ENCODE measurements at regions of chr4 and their contacts with region 1.

Region 1: GRCh38 chr4:6926681-6927478 is 17.3 kb downstream of the TBC1D14 start:
- H3K4me3 Mint-ChIP-seq: peak overlapping the region; percentile 63
- H3K27ac Mint-ChIP-seq: peak overlapping the region; percentile 96
- H3K4me1 Mint-ChIP-seq: peaks cover 95% of the 10 kb centered on the region
- H3K27me3 Mint-ChIP-seq: no peaks in the 10 kb centered on the region

Region 2: DNA sequence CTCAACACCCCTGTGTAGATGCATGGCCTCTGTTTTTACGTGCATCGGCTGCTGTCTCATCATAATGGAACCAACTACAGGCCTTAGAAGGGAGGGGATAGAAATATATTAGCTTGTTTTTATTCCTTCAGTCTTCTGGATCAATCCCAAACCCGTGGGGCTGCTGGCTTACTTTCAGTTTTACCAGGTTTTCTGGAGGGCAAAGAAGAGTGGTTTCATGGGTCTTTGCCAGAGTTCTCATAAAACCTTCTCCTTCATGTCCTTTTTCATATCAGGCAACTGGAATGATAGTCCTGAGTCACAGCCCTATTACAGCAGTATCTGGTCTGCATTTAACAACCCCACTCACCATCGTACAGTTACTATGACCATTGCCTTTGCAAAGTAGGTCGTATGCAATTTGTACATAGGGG is 489.0 kb before region 1 on chr4:
- intact Hi-C with region 1: no loop called
- H3K4me3 Mint-ChIP-seq: no peak overlapping the region
- H3K27ac Mint-ChIP-seq: no peak overlapping the region
- H3K4me1 Mint-ChIP-seq: no peaks in the 10 kb centered on the region
- H3K27me3 Mint-ChIP-seq: no peaks in the 10 kb centered on the region

Region 3: GRCh38 chr4:6942238-6942800 is 15.4 kb after region 1 on chr4:
- intact Hi-C with region 1: loop called (anchors 2 kb)
- H3K4me3 Mint-ChIP-seq: peak overlapping the region; percentile 71
- H3K27ac Mint-ChIP-seq: peak overlapping the region; percentile 94
- H3K4me1 Mint-ChIP-seq: peaks cover 79% of the 10 kb centered on the region
- H3K27me3 Mint-ChIP-seq: no peaks in the 10 kb centered on the region

Region 4: DNA sequence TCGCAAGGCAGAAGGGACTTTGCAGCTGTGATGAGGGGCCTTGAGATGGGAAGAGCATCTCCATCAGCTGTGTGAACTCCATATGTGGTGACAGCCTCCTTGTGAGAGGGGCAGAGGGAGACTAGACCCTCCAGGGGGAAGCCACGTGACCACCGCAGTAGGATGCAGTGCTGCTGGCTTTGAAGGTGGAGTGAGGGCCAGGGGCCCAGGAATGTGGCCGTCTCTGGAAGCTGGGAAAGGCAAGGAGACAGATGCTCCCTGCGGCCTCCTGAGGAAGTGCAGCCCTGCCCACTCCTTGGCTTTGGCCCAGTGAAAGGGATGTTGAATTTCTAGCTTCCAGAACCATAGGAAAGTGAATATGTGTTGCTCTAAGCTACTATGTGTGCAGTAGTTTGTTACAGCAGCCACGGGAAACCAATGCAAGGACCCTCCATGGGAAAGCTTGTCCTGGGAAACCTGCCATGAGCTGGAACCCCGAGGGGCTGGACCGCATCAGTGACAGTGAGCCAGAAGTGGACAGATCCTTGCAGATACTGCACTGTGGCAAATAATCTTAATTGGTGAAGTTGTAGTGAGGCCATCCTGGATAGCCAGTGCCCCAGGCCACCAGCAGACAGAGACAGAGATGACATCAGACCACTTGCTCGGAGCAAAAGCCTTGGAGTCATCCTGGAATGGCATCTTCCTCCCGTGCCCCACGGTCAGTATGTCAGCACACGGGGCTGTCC is 230.0 kb after region 1 on chr4:
- intact Hi-C with region 1: no loop called
- H3K4me3 Mint-ChIP-seq: no peak overlapping the region
- H3K27ac Mint-ChIP-seq: no peak overlapping the region
- H3K4me1 Mint-ChIP-seq: no peaks in the 10 kb centered on the region
- H3K27me3 Mint-ChIP-seq: peaks cover 22% of the 10 kb centered on the region